Naive thymus-derived CD4-positive, alpha-beta T cell (primary cell): ENCODE measurements at regions of chr3 and their contacts with region 1.

Region 1: GRCh38 chr3:105798381-105798934 is 70.4 kb downstream of the CBLB start:
- DNase-seq: peak in 5 of 9 donors; percentile 11 to 42 (median 25)
- ATAC-seq: peak; percentile 64
- H3K4me3 ChIP-seq: no peak overlapping the region
- H3K4me3 Mint-ChIP-seq: peak overlapping the region in 9 of 10 donors; percentile 2 to 66 (median 49)
- H3K27ac ChIP-seq: no peak overlapping the region
- H3K27ac Mint-ChIP-seq: peak overlapping the region; percentile 5 to 69 (median 48)
- H3K4me1 ChIP-seq: peaks cover 19 to 42% of the 10 kb centered on the region in 2 donors
- H3K4me1 Mint-ChIP-seq: peaks cover 40 to 98% (median 87%) of the 10 kb centered on the region in 7 donors
- H3K27me3 ChIP-seq: no peaks in the 10 kb centered on the region
- H3K27me3 Mint-ChIP-seq: no peaks in the 10 kb centered on the region

Region 2: DNA sequence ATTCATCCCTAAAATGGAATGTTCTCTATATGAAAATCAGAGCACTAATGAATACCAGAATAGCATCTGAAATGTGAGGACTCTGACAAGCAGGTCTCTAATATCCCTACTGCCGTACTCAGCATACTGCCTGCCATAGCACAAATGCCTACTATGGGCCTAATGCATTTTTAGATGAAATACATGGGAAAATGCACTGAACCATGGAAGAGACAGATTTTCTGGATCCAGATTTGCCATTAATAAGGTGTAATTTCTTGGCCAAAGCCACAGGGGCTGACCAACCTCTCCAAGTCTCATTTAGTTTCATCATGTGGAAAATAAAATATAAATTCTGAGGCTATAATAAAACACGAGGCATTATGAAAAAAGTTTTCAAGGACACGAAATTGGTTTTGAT is 53.4 kb before region 1 on chr3:
- CTCF ChIA-PET with region 1: no interaction called
- POLR2A ChIA-PET with region 1: no interaction called
- intact Hi-C with region 1: no loop called
- DNase-seq: no peak
- ATAC-seq: no peak
- H3K4me3 ChIP-seq: peak overlapping the region; percentile 38
- H3K4me3 Mint-ChIP-seq: peak overlapping the region in 4 of 10 donors; percentile 67 to 76 (median 72)
- H3K27ac ChIP-seq: no peak overlapping the region
- H3K27ac Mint-ChIP-seq: peak overlapping the region in 5 of 9 donors; percentile 38 to 98 (median 69)
- H3K4me1 ChIP-seq: peaks cover 44 to 45% of the 10 kb centered on the region in 2 donors
- H3K4me1 Mint-ChIP-seq: peaks cover 29 to 79% (median 68%) of the 10 kb centered on the region in 7 donors
- H3K27me3 ChIP-seq: no peaks in the 10 kb centered on the region
- H3K27me3 Mint-ChIP-seq: no peaks in the 10 kb centered on the region

Region 3: GRCh38 chr3:105764378-105765307 is 33.8 kb before region 1 on chr3:
- CTCF ChIA-PET with region 1: no interaction called
- POLR2A ChIA-PET with region 1: interaction called, 3 read pairs
- intact Hi-C with region 1: loop called in 1 of 2 experiments (anchors 5 kb)
- DNase-seq: peak in 7 of 9 donors; percentile 22 to 75 (median 56)
- ATAC-seq: peak; percentile 71
- H3K4me3 ChIP-seq: no peak overlapping the region
- H3K4me3 Mint-ChIP-seq: peak overlapping the region in 9 of 10 donors; percentile 14 to 75 (median 61)
- H3K27ac ChIP-seq: peak overlapping the region; percentile 47
- H3K27ac Mint-ChIP-seq: peak overlapping the region; percentile 63 to 90 (median 86)
- H3K4me1 ChIP-seq: peaks cover 40 to 55% of the 10 kb centered on the region in 2 donors
- H3K4me1 Mint-ChIP-seq: peaks cover 42 to 88% (median 75%) of the 10 kb centered on the region in 7 donors
- H3K27me3 ChIP-seq: no peaks in the 10 kb centered on the region
- H3K27me3 Mint-ChIP-seq: no peaks in the 10 kb centered on the region

Region 4: GRCh38 chr3:105781871-105782270 is 16.6 kb before region 1 on chr3:
- CTCF ChIA-PET with region 1: interaction called, 4 read pairs
- POLR2A ChIA-PET with region 1: interaction called, 4 read pairs
- intact Hi-C with region 1: loop called in 1 of 2 experiments (anchors 1 kb)
- DNase-seq: no peak
- ATAC-seq: no peak
- H3K4me3 ChIP-seq: no peak overlapping the region
- H3K4me3 Mint-ChIP-seq: peak overlapping the region in 7 of 10 donors; percentile 1 to 51 (median 34)
- H3K27ac ChIP-seq: no peak overlapping the region
- H3K27ac Mint-ChIP-seq: peak overlapping the region in 8 of 9 donors; percentile 1 to 81 (median 24)
- H3K4me1 ChIP-seq: peaks cover 18% of the 10 kb centered on the region in 2 donors
- H3K4me1 Mint-ChIP-seq: peaks cover 31 to 77% (median 64%) of the 10 kb centered on the region in 7 donors
- H3K27me3 ChIP-seq: no peaks in the 10 kb centered on the region
- H3K27me3 Mint-ChIP-seq: no peaks in the 10 kb centered on the region

Region 5: GRCh38 chr3:105812194-105812586 is 13.7 kb after region 1 on chr3:
- CTCF ChIA-PET with region 1: interaction called, 3 read pairs
- POLR2A ChIA-PET with region 1: no interaction called
- intact Hi-C with region 1: loop called in 1 of 2 experiments (anchors 1 kb)
- DNase-seq: no peak
- ATAC-seq: no peak
- H3K4me3 ChIP-seq: no peak overlapping the region
- H3K4me3 Mint-ChIP-seq: peak overlapping the region in 2 of 10 donors; percentile 2 to 14
- H3K27ac ChIP-seq: no peak overlapping the region
- H3K27ac Mint-ChIP-seq: peak overlapping the region in 5 of 9 donors; percentile 3 to 38 (median 10)
- H3K4me1 ChIP-seq: peaks cover under 1 to 7% of the 10 kb centered on the region in 2 donors
- H3K4me1 Mint-ChIP-seq: peaks cover 42 to 83% (median 68%) of the 10 kb centered on the region in 7 donors
- H3K27me3 ChIP-seq: no peaks in the 10 kb centered on the region
- H3K27me3 Mint-ChIP-seq: no peaks in the 10 kb centered on the region

Region 6: DNA sequence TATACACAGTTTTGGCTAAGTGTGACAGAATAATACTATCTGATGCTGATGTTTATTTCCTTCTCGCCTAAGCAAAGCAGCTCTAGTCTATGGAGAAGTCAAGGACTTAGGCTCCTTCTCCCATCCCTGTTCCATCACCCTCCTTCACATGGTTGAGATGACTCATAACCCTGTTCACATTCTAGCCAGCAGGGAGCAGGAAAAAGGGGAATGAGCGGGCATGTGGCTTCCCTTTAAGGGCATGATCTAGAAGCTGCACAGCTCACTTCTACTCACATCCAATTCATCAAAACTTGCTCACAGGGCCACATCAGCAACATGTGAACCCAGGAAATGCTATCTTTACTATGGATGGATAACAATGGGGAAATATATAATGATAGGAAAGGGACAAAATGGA is 29.5 kb after region 1 on chr3:
- CTCF ChIA-PET with region 1: no interaction called
- POLR2A ChIA-PET with region 1: interaction called, 3 read pairs
- intact Hi-C with region 1: loop called in 1 of 2 experiments (anchors 5 kb)
- DNase-seq: no peak
- ATAC-seq: no peak
- H3K4me3 ChIP-seq: no peak overlapping the region
- H3K4me3 Mint-ChIP-seq: peak overlapping the region in 4 of 10 donors; percentile 29 to 52 (median 40)
- H3K27ac ChIP-seq: no peak overlapping the region
- H3K27ac Mint-ChIP-seq: peak overlapping the region in 4 of 9 donors; percentile 1 to 90 (median 20)
- H3K4me1 ChIP-seq: peaks cover 37 to 65% of the 10 kb centered on the region in 2 donors
- H3K4me1 Mint-ChIP-seq: peaks cover 57 to 92% (median 88%) of the 10 kb centered on the region in 7 donors
- H3K27me3 ChIP-seq: no peaks in the 10 kb centered on the region
- H3K27me3 Mint-ChIP-seq: no peaks in the 10 kb centered on the region